ENCODE measurements at regions of chr15 and their contacts with region 1.

Region 1: DNA sequence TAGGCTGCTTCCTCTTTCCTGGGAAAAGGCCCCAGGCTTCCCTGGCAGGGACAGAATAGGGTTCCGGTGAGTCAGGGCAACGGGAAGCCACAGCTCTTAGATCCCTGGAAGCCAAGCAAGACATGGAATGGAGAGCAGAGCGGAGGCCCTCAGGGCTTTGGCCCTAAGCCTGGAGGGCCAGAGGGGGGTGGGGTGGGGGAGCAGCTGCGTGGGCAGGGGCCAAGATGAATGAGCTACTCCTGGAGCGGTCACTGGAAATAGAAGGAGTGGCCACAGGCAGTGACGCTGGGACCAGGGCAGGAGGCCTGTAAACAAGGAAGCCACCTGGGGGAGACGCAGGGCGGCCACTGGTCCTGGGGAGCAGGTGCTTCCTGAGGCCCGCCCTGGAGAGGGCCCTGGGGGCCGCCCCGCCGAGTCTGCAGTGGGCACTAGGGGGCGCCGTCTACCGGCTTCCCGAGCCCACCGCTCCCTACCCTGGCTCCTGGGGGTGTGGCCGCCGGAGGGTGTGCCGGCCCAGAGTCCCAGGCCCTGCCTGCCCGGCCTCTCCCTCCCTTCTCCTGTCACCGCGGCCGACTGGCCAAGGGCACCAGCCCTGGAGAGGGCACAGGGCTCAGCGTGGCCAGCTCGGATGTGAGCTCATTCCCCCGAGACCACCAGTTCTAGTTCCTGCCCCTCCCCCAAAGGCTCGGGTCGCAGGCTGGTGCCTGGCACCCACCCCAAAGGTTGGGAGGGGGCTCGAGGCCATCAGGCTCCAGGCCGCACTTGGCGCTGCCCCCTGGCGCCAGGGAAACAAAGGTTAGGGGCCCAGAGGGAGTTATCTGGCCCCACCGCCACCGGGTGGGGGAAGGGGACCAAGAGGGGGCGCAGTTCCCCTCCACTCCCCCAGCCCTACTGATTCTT is 12.1 kb downstream of the VPS18 start:
- DNase-seq: peak; percentile 90
- ATAC-seq: peak; percentile 80
- H3K4me3 Mint-ChIP-seq: peak overlapping the region; percentile 82
- H3K27ac Mint-ChIP-seq: peak overlapping the region; percentile 87
- H3K4me1 Mint-ChIP-seq: peaks cover 52% of the 10 kb centered on the region
- H3K27me3 Mint-ChIP-seq: no peaks in the 10 kb centered on the region
- CTCF ChIP-seq: peak; percentile 46

Region 2: GRCh38 chr15:40684381-40684780 is 222.0 kb before region 1 on chr15:
- CTCF ChIA-PET with region 1: no interaction called
- POLR2A ChIA-PET with region 1: no interaction called
- intact Hi-C with region 1: no loop called
- DNase-seq: no peak
- ATAC-seq: no peak
- H3K4me3 Mint-ChIP-seq: no peak overlapping the region
- H3K27ac Mint-ChIP-seq: no peak overlapping the region
- H3K4me1 Mint-ChIP-seq: peaks cover 15% of the 10 kb centered on the region
- H3K27me3 Mint-ChIP-seq: no peaks in the 10 kb centered on the region
- CTCF ChIP-seq: no peak

Region 3: DNA sequence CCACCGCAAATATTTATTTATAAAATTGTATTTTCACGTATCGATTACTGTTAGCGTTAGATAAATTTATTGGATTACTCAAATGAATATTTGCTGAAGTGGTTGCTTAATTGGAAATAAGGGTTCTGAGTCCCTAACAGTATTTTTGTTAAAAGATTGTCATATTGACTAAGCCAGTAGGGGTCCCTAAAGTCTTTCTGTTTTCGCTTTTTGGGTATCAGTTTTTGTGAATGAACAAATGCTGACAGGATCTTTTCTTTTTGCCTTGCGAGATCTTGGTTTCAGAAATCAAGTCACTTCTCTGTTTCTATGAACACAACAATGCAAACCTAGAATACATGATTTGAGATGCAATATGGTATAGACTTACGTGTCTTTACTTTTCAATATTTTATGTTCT is 204.3 kb before region 1 on chr15:
- CTCF ChIA-PET with region 1: no interaction called
- POLR2A ChIA-PET with region 1: interaction called, 10 read pairs
- intact Hi-C with region 1: no loop called
- DNase-seq: no peak
- ATAC-seq: no peak
- H3K4me3 Mint-ChIP-seq: no peak overlapping the region
- H3K27ac Mint-ChIP-seq: no peak overlapping the region
- H3K4me1 Mint-ChIP-seq: no peaks in the 10 kb centered on the region
- H3K27me3 Mint-ChIP-seq: no peaks in the 10 kb centered on the region
- CTCF ChIP-seq: no peak

Region 4: DNA sequence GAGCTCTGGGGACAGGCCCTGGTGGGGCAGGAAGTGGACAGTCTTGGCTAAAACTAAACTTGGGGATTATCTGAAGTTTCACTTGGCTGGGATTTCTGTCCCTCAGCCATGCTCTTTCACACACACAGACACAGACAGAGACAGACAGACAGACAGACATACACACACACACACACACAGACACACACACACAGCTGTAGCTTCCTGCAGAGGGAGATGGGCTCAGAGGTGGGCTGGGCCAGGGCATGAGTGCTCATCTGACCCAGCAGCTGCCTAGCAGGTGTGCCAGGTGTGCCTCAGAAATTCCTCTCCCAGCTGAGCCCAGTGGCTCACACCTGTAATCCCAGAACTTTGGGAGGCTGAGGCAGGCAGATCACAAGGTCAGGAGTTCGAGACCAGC is 35.6 kb before region 1 on chr15:
- CTCF ChIA-PET with region 1: no interaction called
- POLR2A ChIA-PET with region 1: no interaction called
- intact Hi-C with region 1: no loop called
- DNase-seq: no peak
- ATAC-seq: no peak
- H3K4me3 Mint-ChIP-seq: no peak overlapping the region
- H3K27ac Mint-ChIP-seq: no peak overlapping the region
- H3K4me1 Mint-ChIP-seq: peaks cover 23% of the 10 kb centered on the region
- H3K27me3 Mint-ChIP-seq: no peaks in the 10 kb centered on the region
- CTCF ChIP-seq: no peak

Region 5: DNA sequence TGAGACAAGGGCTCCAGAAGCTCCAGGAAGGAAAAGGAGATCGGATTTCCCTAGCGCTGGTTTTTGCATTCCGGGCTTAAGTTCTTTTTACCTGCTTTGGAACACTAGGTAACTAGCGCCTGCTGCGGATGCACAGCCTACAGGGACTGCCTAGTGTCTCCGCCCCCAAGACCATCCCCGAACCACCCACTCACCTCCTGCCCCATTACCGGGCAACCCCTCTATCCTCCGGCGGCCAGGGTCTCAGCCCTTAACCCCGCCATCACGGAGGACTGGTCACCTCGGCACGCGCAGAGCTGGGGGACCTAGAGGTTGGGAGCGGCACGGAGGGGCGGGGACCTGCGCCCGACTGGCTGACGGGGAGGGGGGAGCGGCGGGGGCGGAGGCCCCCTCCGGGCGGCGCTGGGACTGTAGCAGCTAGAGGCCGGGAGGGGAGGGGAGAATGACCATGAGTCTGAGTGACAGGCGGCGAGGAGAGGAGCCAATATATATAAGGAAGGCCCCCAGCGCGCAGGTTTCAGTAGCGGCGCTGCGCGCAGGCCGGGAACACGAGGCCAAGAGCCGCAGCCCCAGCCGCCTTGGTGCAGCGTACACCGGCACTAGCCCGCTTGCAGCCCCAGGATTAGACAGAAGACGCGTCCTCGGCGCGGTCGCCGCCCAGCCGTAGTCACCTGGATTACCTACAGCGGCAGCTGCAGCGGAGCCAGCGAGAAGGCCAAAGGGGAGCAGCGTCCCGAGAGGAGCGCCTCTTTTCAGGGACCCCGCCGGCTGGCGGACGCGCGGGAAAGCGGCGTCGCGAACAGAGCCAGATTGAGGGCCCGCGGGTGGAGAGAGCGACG is 22.7 kb after region 1 on chr15 and contains the start of gene DLL4:
- CTCF ChIA-PET with region 1: interaction called, 29 read pairs
- POLR2A ChIA-PET with region 1: interaction called, 10 read pairs
- intact Hi-C with region 1: loop called (anchors 1 kb)
- DNase-seq: peak; percentile 45
- ATAC-seq: peak; percentile 43
- H3K4me3 Mint-ChIP-seq: peak within 1 kb of the TSS; percentile 77
- H3K27ac Mint-ChIP-seq: no peak within 1 kb of the TSS
- H3K4me1 Mint-ChIP-seq: peaks cover 55% of the 10 kb centered on the region
- H3K27me3 Mint-ChIP-seq: peaks cover 53% of the 10 kb centered on the region
- CTCF ChIP-seq: no peak
- total RNA-seq, gene DLL4: 0.05 TPM in 1 of 2 replicates, not detected in the other

Region 6: DNA sequence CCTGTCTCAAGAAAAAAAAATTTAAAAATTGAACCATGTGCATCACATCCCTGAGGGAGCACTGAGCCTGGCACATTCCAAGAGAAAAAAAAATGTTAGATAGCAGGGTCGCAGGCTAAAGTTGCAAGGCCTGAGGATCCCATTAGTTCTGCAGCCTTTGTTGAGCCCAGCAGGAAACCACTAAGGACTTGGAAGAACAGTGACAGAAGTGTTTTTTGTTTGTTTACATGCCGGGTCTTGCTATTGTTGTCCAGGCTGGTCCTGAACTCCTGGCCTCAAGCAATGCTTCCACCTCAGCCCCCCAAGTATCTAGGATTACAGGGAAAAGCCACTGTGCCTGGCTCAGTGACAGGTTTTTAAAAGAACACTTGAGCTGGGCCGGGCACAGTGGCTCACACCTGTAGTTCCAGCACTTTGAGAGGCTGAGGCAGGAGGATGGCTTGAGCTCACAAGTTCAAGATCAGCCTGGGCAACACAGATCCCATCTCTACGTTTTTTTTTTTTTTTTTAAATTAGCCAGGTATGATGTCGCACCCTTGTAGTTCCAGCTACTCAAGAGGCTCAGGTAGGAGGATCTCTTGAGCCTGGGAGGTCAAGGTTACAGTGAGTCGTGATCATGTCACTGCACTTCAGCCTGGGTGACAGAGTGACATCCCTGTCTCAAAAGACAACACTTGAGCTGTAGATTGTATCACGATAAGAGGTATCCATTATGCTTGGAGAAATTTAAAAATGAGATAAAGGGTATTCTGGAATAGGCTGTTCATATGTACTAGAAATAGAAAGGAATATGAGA is 62.1 kb after region 1 on chr15:
- CTCF ChIA-PET with region 1: no interaction called
- POLR2A ChIA-PET with region 1: no interaction called
- intact Hi-C with region 1: no loop called
- DNase-seq: no peak
- ATAC-seq: no peak
- H3K4me3 Mint-ChIP-seq: no peak overlapping the region
- H3K27ac Mint-ChIP-seq: no peak overlapping the region
- H3K4me1 Mint-ChIP-seq: no peaks in the 10 kb centered on the region
- H3K27me3 Mint-ChIP-seq: peaks cover 3% of the 10 kb centered on the region
- CTCF ChIP-seq: no peak

Region 7: GRCh38 chr15:41013698-41014414 is 107.5 kb after region 1 on chr15:
- CTCF ChIA-PET with region 1: interaction called, 6 read pairs
- POLR2A ChIA-PET with region 1: interaction called, 3 read pairs
- intact Hi-C with region 1: loop called (anchors 2 kb)
- DNase-seq: no peak
- ATAC-seq: peak; percentile 61
- H3K4me3 Mint-ChIP-seq: no peak overlapping the region
- H3K27ac Mint-ChIP-seq: no peak overlapping the region
- H3K4me1 Mint-ChIP-seq: peaks cover 23% of the 10 kb centered on the region
- H3K27me3 Mint-ChIP-seq: no peaks in the 10 kb centered on the region
- CTCF ChIP-seq: no peak

Region 8: GRCh38 chr15:41180206-41180789 is 274.0 kb after region 1 on chr15:
- CTCF ChIA-PET with region 1: interaction called, 97 read pairs
- POLR2A ChIA-PET with region 1: no interaction called
- intact Hi-C with region 1: loop called (anchors 1 kb)
- DNase-seq: no peak
- ATAC-seq: no peak
- H3K4me3 Mint-ChIP-seq: no peak overlapping the region
- H3K27ac Mint-ChIP-seq: no peak overlapping the region
- H3K4me1 Mint-ChIP-seq: peaks cover 4% of the 10 kb centered on the region
- H3K27me3 Mint-ChIP-seq: no peaks in the 10 kb centered on the region
- CTCF ChIP-seq: no peak

Region 9: GRCh38 chr15:41331833-41332787 is 425.8 kb after region 1 on chr15 and contains the start of gene OIP5:
- CTCF ChIA-PET with region 1: interaction called, 3 read pairs
- POLR2A ChIA-PET with region 1: no interaction called
- intact Hi-C with region 1: loop called (anchors 2 kb)
- DNase-seq: peak; percentile 88
- ATAC-seq: peak; percentile 94
- H3K4me3 Mint-ChIP-seq: peak within 1 kb of the TSS; percentile 100
- H3K27ac Mint-ChIP-seq: peak within 1 kb of the TSS; percentile 97
- H3K4me1 Mint-ChIP-seq: peaks cover 31% of the 10 kb centered on the region
- H3K27me3 Mint-ChIP-seq: no peaks in the 10 kb centered on the region
- CTCF ChIP-seq: no peak
- total RNA-seq, gene OIP5: 0.62 and 1.4 TPM in 2 replicates